ENCODE measurements at regions of chr14 and their contacts with region 1.

Region 1: GRCh38 chr14:88189417-88190191 is 133.5 kb downstream of the KCNK10 start:
- DNase-seq: peak in 4 of 5 donors; percentile 37 to 71 (median 63)
- ATAC-seq: peak; percentile 93 to 98 (median 94)
- H3K4me3 ChIP-seq: peak overlapping the region in 9 of 12 donors; percentile 17 to 42 (median 22)
- H3K27ac ChIP-seq: no peak overlapping the region
- H3K4me1 ChIP-seq: peaks cover 0 to 9% (median 4%) of the 10 kb centered on the region in 12 donors
- H3K27me3 ChIP-seq: peaks cover 0 to 29% (median 16%) of the 10 kb centered on the region in 9 donors
- CTCF ChIP-seq: peak; percentile 46 to 81 (median 65)
- POLR2A ChIP-seq: no peak

Region 2: DNA sequence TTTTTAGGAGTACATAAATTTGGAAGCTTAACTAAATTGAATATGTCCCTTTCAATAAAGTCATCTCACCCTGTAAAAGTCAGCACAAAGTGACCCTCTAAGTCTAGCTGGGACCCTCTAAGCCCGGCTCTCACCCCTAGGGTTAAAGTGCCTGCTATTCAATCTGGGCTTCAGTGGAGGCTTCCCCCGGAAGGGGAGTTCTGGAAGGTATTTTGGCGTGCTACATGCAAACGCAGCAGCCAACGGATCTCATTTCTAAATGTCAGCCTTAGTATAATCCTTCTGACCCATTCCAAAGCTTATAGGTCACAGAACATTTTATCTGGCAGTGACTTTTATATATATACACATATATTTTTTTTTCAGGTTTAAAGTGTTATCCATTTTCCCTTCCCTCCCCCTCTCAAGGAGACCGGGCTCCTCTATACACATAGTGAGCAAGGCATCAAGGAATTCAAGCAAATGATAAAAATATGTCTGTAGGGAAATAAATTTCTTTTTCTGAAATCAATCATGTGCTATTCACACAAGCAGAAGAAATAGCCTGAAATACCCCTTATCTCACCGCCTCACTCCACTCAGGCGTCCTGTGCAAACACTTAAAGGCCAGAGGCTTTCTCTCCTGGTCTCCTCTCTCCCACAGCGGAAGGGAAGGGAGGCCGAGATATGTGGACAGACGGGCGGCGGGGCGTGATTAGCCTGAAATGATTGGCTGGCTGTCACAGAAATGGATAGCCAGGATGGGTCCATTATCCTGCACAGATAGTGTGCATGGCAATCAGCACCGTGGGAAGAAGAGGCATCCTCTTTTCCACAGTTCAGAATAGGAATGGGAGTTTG is 498.3 kb before region 1 on chr14:
- intact Hi-C with region 1: no loop called
- DNase-seq: peak in 1 of 5 donors; percentile 22
- ATAC-seq: peak in 1 of 4 donors; percentile 46
- H3K4me3 ChIP-seq: no peak overlapping the region
- H3K27ac ChIP-seq: no peak overlapping the region
- H3K4me1 ChIP-seq: no peaks in the 10 kb centered on the region
- H3K27me3 ChIP-seq: peaks cover 0 to 9% (median 0%) of the 10 kb centered on the region in 9 donors
- CTCF ChIP-seq: no peak
- POLR2A ChIP-seq: no peak

Region 3: DNA sequence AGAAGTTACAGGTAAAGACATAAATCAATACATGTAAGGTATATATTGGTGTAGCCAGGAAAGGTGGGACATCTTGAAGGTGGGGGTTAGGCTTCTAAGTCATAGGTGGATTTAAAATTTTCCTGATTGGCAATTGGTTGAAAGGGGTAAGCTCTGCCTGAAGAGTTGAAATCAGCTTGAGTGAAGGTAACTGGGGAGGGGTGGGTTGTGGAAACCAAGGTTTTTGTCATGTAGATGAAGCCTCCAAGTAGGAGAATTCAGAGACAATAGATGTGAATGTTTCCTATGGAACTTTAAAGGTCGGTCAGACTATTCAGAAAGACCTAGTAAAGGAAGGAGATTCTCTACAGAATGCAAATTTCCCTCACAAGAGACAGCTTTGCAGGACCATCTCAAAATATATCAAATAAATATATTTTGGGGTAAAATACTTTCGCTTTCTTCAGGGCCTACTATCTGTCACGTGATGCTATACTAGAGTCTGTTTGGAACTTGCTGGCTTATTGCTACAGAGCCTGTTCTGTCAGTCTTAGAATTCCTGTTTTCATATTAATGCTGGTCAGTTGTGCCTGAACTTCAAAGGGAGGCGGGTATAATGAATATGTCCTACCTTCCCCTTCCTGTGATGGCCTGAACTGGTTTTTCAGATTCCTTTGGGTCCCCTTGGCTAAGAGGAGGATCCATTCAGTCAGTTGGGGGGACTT is 175.3 kb after region 1 on chr14:
- intact Hi-C with region 1: loop called in 1 of 10 experiments (anchors 10 kb)
- DNase-seq: no peak
- ATAC-seq: no peak
- H3K4me3 ChIP-seq: no peak overlapping the region
- H3K27ac ChIP-seq: no peak overlapping the region
- H3K4me1 ChIP-seq: no peaks in the 10 kb centered on the region
- H3K27me3 ChIP-seq: peaks cover 0 to 7% (median 0%) of the 10 kb centered on the region in 9 donors
- CTCF ChIP-seq: no peak
- POLR2A ChIP-seq: no peak

Region 4: GRCh38 chr14:88380405-88380804 is 190.8 kb after region 1 on chr14:
- intact Hi-C with region 1: loop called (anchors 2 to 10 kb)
- DNase-seq: no peak
- ATAC-seq: no peak
- H3K4me3 ChIP-seq: no peak overlapping the region
- H3K27ac ChIP-seq: no peak overlapping the region
- H3K4me1 ChIP-seq: peaks cover 0 to 9% (median 5%) of the 10 kb centered on the region in 12 donors
- H3K27me3 ChIP-seq: peaks cover 0 to 4% (median 0%) of the 10 kb centered on the region in 9 donors
- CTCF ChIP-seq: peak in 7 of 12 donors; percentile 10 to 42 (median 25)
- POLR2A ChIP-seq: no peak

Region 5: DNA sequence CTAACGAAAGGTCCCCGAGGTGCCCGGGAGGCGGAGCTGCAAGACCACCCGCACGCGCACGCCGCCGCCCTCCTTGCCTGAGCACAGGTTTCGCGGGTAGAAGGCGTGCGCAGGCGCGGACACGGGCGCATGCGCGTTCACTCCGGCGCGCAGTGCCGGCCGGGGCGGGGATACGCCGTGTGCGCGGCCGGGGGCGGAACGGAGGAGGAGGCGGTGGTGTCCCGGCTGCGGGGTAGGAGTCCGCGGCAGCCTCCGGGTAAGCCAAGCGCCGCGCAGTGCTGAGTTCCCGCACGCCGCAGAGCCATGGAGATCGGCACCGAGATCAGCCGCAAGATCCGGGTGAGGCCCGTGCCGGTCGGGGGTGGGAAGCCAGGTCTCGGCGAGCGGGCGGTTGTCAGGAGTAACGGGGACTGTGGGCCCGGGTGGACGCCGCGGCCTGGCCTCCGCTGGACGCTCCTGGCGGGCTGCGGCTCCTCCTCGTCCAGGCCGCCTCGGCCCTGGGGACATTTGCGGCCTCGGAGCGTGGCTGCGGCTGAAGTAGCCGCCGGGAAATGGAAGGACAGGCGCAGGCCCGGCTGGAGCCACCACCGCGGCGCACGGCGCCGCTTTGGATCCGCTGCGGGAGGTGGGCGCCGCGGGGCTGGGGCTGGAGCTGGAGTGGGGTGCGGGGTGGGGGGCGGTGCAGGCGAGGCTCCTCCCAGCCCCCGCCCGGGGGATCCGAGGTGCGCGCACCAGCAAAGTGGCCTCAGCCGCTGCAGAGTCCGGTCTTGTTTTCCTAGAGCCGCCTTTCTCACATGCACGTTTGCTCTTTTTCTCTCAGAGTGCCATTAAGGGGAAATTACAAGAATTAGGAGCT is 373.5 kb after region 1 on chr14 and contains the start of gene ZC3H14:
- intact Hi-C with region 1: loop called in 1 of 10 experiments (anchors 5 kb)
- DNase-seq: peak; percentile 86 to 94 (median 88)
- ATAC-seq: peak; percentile 95 to 99 (median 98)
- H3K4me3 ChIP-seq: peak within 1 kb of the TSS; percentile 60 to 99 (median 88)
- H3K27ac ChIP-seq: peak within 1 kb of the TSS; percentile 82 to 96 (median 92)
- H3K4me1 ChIP-seq: peaks cover 0 to 26% (median 18%) of the 10 kb centered on the region in 12 donors
- H3K27me3 ChIP-seq: peaks cover 0 to 2% (median 0%) of the 10 kb centered on the region in 9 donors
- CTCF ChIP-seq: peak in 2 of 12 donors; percentile 11 to 16
- POLR2A ChIP-seq: peak in 1 of 2 donors; percentile 82
- total RNA-seq, gene ZC3H14: 36.8 to 62.7 (median 44.7) TPM